HepG2 (cell line): ENCODE measurements at regions of chr1 and their contacts with region 1.

Region 1: GRCh38 chr1:231211005-231211857 is 29.8 kb upstream of the GNPAT start:
- DNase-seq: peak; percentile 76
- ATAC-seq: peak; percentile 90
- H3K4me3 ChIP-seq: peak overlapping the region in 2 of 3 experiments; percentile 30 to 54; a peak in 4 of 6 replicates
- H3K27ac ChIP-seq: peak overlapping the region; percentile 6
- H3K4me1 ChIP-seq: peaks cover 35% of the 10 kb centered on the region
- H3K27me3 ChIP-seq: no peaks in the 10 kb centered on the region
- CTCF ChIP-seq: peak; percentile 98
- EP300 ChIP-seq: no peak
- POLR2A ChIP-seq: no peak
- RAD21 ChIP-seq: peak; percentile 94

Region 2: DNA sequence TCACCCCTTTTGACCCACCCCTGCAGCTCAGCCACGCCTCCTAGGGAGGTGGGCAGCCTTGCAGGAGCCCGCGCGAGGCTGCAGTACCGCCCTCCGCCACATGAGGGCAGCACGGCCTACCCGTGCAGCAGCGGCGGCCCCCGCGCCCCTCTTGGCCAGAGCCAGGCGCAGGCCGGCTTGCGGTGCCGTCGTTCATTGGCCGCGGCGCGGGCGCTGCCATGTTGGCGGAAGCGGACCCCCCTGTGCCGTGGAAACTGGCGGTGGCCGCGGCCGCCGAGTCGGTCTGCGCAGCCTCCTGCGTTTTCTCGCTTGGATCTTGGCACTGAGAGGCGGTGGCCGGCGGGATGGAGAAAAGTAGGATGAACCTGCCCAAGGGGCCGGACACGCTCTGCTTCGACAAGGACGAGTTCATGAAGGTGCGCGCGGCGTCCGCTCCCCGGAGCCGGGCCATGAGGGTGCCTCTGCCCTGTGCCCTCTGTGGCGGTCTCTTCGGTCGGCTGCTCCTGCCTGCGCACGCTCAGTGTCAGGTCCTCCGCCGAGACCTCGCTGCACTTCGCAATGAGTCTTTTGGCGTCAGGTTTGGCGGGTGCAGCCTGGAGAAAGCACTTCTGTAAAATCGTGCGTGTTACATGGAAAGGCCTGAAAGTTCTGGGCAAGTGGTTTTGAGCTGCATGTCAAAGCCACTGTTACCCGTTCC is 568.8 kb before region 1 on chr1 and contains the start of gene COG2:
- CTCF ChIA-PET with region 1: no interaction called
- POLR2A ChIA-PET with region 1: no interaction called
- in situ Hi-C with region 1: loop called (anchors 25 kb)
- intact Hi-C with region 1: no loop called
- DNase-seq: peak; percentile 77
- ATAC-seq: peak; percentile 95
- H3K4me3 ChIP-seq: peak within 1 kb of the TSS; percentile 85 to 96 (median 88)
- H3K27ac ChIP-seq: peak within 1 kb of the TSS; percentile 86
- H3K4me1 ChIP-seq: peaks cover 75% of the 10 kb centered on the region
- H3K27me3 ChIP-seq: no peaks in the 10 kb centered on the region; a peak in 1 of 5 replicates
- CTCF ChIP-seq: peak; percentile 96
- EP300 ChIP-seq: no peak; a peak in 1 of 4 replicates
- POLR2A ChIP-seq: peak; percentile 67 to 88
- RAD21 ChIP-seq: peak; percentile 93
- total RNA-seq, gene COG2: 36.3 and 51.3 TPM in 2 replicates

Region 3: DNA sequence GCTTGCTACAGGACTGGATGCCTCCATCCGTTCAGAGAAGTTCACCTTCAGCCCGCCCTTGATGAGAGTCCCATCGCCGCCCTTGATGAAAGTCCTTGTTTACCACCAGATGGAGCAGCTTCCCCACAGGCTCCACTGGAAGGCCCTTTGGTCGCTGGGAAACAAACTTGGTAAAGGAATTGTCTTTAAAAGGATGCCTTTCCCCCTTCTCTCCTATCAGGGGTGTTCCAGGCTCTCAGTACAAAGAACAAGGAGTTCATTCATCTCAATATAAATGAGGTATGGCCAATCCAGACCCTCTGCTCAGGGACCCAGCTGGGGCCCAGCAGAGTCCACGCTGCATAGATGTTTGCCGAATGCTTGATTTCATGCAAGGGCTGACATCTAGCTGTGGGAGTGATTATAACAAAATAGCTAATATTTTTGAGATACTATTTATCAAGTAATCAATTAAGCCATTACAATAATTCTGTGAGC is 413.3 kb before region 1 on chr1:
- CTCF ChIA-PET with region 1: interaction called, 14 read pairs
- POLR2A ChIA-PET with region 1: no interaction called
- in situ Hi-C with region 1: loop called (anchors 25 kb)
- intact Hi-C with region 1: loop called (anchors 1 kb)
- DNase-seq: peak; percentile 62
- ATAC-seq: peak; percentile 92
- H3K4me3 ChIP-seq: no peak overlapping the region; a peak in 1 of 6 replicates
- H3K27ac ChIP-seq: no peak overlapping the region
- H3K4me1 ChIP-seq: peaks cover 22% of the 10 kb centered on the region
- H3K27me3 ChIP-seq: peaks cover 0 to 10% of the 10 kb centered on the region in 2 experiments; a peak in 1 of 5 replicates
- CTCF ChIP-seq: peak; percentile 88
- EP300 ChIP-seq: no peak
- POLR2A ChIP-seq: no peak
- RAD21 ChIP-seq: peak; percentile 75

Region 4: GRCh38 chr1:230917284-230918135 is 293.7 kb before region 1 on chr1:
- CTCF ChIA-PET with region 1: no interaction called
- POLR2A ChIA-PET with region 1: no interaction called
- in situ Hi-C with region 1: no loop called
- intact Hi-C with region 1: loop called (anchors 5 kb)
- DNase-seq: peak; percentile 80
- ATAC-seq: peak; percentile 90
- H3K4me3 ChIP-seq: no peak overlapping the region
- H3K27ac ChIP-seq: no peak overlapping the region
- H3K4me1 ChIP-seq: peaks cover 13% of the 10 kb centered on the region
- H3K27me3 ChIP-seq: no peaks in the 10 kb centered on the region
- CTCF ChIP-seq: peak; percentile 81
- EP300 ChIP-seq: no peak
- POLR2A ChIP-seq: no peak
- RAD21 ChIP-seq: peak; percentile 50; the same call in 1 of the 2 replicates

Region 5: DNA sequence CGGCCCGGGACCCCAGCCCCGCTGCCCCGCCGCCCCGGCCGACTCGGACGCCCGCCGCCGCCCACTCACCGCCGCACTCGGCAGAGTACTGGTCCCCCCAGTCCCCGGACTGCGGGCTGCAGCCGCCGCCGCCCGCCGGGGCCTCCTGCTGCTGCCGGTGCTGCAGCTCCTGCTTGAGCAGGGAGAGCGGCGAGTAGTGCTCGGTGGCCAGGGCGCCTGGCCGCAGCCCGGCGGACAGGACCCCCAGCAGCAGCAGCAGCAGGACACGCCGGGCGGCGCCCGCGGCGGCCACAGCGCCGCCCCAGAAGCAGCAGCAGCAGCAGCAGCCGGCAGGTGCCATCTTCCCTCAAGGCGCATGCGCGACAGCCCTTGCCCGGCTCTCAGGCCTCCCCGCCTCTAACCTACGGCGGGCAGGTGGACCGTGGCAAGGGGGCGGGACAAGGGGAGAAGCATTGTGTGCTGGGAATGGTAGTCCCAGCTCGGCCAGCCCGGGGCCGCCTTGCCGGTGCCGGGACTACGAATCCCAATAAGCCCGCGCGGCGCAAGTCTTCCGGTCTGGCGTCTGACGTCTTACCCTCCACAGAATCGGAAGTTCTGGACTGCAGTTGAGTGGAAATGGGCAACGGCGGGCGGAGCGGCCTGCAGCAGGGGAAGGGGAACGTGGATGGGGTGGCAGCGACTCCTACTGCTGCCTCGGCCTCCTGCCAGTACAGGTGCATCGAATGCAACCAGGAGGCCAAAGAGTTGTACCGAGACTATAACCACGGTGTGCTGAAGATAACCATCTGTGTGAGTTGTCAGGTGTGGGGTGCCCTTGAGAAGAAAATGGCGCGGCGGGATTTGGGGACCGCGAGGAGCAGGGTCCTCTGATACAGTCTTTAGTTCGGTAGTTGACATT is 232.5 kb before region 1 on chr1 and contains the starts of genes ARV1 and TTC13:
- CTCF ChIA-PET with region 1: no interaction called
- POLR2A ChIA-PET with region 1: no interaction called
- in situ Hi-C with region 1: no loop called
- intact Hi-C with region 1: loop called (anchors 2 kb)
- DNase-seq: peak; percentile 98
- ATAC-seq: peak; percentile 98
- H3K4me3 ChIP-seq: peak within 1 kb of the TSS; percentile 87 to 94 (median 89)
- H3K27ac ChIP-seq: peak within 1 kb of the TSS; percentile 64
- H3K4me1 ChIP-seq: peaks cover 21% of the 10 kb centered on the region
- H3K27me3 ChIP-seq: no peaks in the 10 kb centered on the region; a peak in 1 of 5 replicates
- CTCF ChIP-seq: peak; percentile 85
- EP300 ChIP-seq: no peak
- POLR2A ChIP-seq: peak; percentile 65 to 75; a peak in 3 of 4 replicates
- RAD21 ChIP-seq: peak; percentile 86
- total RNA-seq, gene ARV1: 8.9 and 15.2 TPM in 2 replicates
- total RNA-seq, gene TTC13: 8.1 and 15.9 TPM in 2 replicates

Region 6: GRCh38 chr1:231091831-231092301 is 119.4 kb before region 1 on chr1:
- CTCF ChIA-PET with region 1: interaction called, 6 read pairs
- POLR2A ChIA-PET with region 1: no interaction called
- in situ Hi-C with region 1: loop called (anchors 10 kb)
- intact Hi-C with region 1: loop called (anchors 1 kb)
- DNase-seq: peak; percentile 40
- ATAC-seq: peak; percentile 90
- H3K4me3 ChIP-seq: no peak overlapping the region
- H3K27ac ChIP-seq: no peak overlapping the region
- H3K4me1 ChIP-seq: no peaks in the 10 kb centered on the region
- H3K27me3 ChIP-seq: no peaks in the 10 kb centered on the region; a peak in 1 of 5 replicates
- CTCF ChIP-seq: peak; percentile 86
- EP300 ChIP-seq: no peak
- POLR2A ChIP-seq: no peak
- RAD21 ChIP-seq: 0 out of 2 replicates have a peak, but pooled peaks have one; percentile 56

Region 7: GRCh38 chr1:231170875-231171274 is 40.4 kb before region 1 on chr1:
- CTCF ChIA-PET with region 1: no interaction called
- POLR2A ChIA-PET with region 1: no interaction called
- in situ Hi-C with region 1: no loop called
- intact Hi-C with region 1: loop called (anchors 2 kb)
- DNase-seq: peak; percentile 18
- ATAC-seq: peak; percentile 76
- H3K4me3 ChIP-seq: no peak overlapping the region
- H3K27ac ChIP-seq: no peak overlapping the region
- H3K4me1 ChIP-seq: no peaks in the 10 kb centered on the region
- H3K27me3 ChIP-seq: peaks cover 0 to 8% of the 10 kb centered on the region in 2 experiments; a peak in 2 of 5 replicates
- CTCF ChIP-seq: 0 out of 2 replicates have a peak, but pooled peaks have one; percentile 24
- EP300 ChIP-seq: no peak
- POLR2A ChIP-seq: no peak
- RAD21 ChIP-seq: no peak

Region 8: GRCh38 chr1:231266811-231267322 is 55.6 kb after region 1 on chr1:
- CTCF ChIA-PET with region 1: no interaction called
- POLR2A ChIA-PET with region 1: no interaction called
- in situ Hi-C with region 1: no loop called
- intact Hi-C with region 1: no loop called
- DNase-seq: no peak
- ATAC-seq: no peak
- H3K4me3 ChIP-seq: no peak overlapping the region
- H3K27ac ChIP-seq: no peak overlapping the region
- H3K4me1 ChIP-seq: peaks cover 13% of the 10 kb centered on the region
- H3K27me3 ChIP-seq: no peaks in the 10 kb centered on the region
- CTCF ChIP-seq: no peak
- EP300 ChIP-seq: no peak
- POLR2A ChIP-seq: no peak
- RAD21 ChIP-seq: no peak